Posterior cingulate gyrus (tissue), 11 donors: ENCODE measurements at regions of chr4 and their contacts with region 1.

Region 1: GRCh38 chr4:55158957-55159356 is 33.6 kb upstream of the KDR start:
- DNase-seq: no peak

Region 2: DNA sequence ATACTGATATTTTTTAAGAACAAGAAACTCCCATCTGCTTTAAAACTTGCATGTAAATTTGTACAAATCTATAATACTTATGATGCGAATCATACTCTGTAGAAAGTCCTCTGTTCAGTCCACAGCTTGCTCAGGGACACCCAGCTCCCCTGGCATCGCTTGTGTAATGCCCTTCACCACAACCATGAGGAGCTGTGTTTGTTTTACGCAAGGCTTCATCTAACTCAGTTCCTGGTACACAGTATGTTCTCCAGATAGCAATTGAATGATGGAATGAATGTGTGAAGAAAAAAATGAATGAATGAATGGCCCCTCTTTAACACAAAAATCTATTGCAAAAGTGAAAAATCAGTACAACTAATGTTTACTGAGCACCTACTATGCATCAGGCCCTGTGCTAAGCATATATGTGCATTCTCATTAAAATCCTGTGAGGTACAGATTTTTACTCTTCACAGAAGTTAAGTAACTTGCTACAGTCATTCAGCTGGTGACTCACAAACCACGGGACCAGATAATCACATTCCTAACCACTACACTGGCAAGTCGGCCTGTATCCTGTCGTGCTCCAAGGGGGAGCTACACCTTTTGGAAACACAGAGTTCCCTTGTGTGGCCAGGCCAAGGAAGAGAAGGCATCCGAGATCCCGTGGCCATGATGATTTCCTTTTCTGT is 25.1 kb after region 1 on chr4:
- intact Hi-C with region 1: loop called (anchors 1 kb)
- DNase-seq: no peak